Colonic mucosa (tissue), 4 donors: ENCODE measurements at regions of chr5 and their contacts with region 1.

Region 1: GRCh38 chr5:9361835-9362234 is 184.0 kb downstream of the SEMA5A start:
- DNase-seq: peak; percentile 68
- H3K4me3 ChIP-seq: no peak overlapping the region
- H3K27ac ChIP-seq: no peak overlapping the region
- H3K4me1 ChIP-seq: no peaks in the 10 kb centered on the region
- H3K27me3 ChIP-seq: no peaks in the 10 kb centered on the region
- CTCF ChIP-seq: peak; percentile 56

Region 2: DNA sequence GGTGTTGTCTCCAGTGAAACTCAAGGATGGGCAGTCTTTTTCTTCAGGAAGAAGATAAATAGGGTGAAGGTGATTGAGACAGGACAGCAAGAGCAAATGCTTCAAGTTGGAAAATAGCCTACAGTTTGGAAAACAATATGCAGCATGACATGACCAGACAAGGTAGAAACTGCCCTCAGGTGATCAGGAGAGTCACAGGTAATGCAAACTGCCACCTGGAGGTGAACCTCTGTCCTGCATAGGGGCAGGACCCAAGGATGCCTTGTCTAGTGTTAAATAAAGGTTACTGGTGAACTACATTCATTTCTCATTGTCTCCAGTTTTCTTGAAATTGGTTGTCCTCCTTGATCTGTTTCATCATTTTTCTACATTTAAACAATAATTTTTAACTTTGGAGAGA is 48.1 kb before region 1 on chr5:
- intact Hi-C with region 1: no loop called
- DNase-seq: no peak
- H3K4me3 ChIP-seq: no peak overlapping the region
- H3K27ac ChIP-seq: no peak overlapping the region
- H3K4me1 ChIP-seq: no peaks in the 10 kb centered on the region
- H3K27me3 ChIP-seq: no peaks in the 10 kb centered on the region
- CTCF ChIP-seq: no peak

Region 3: GRCh38 chr5:9519537-9519936 is 157.7 kb after region 1 on chr5:
- intact Hi-C with region 1: no loop called
- DNase-seq: no peak
- H3K4me3 ChIP-seq: no peak overlapping the region
- H3K27ac ChIP-seq: no peak overlapping the region
- H3K4me1 ChIP-seq: no peaks in the 10 kb centered on the region
- H3K27me3 ChIP-seq: no peaks in the 10 kb centered on the region
- CTCF ChIP-seq: no peak

Region 4: GRCh38 chr5:9544502-9545135 is 182.8 kb after region 1 on chr5:
- intact Hi-C with region 1: loop called (anchors 5 kb)
- DNase-seq: peak; percentile 92
- H3K4me3 ChIP-seq: peak overlapping the region; percentile 60
- H3K27ac ChIP-seq: peak overlapping the region; percentile 62
- H3K4me1 ChIP-seq: no peaks in the 10 kb centered on the region
- H3K27me3 ChIP-seq: no peaks in the 10 kb centered on the region
- CTCF ChIP-seq: peak; percentile 73

Region 5: GRCh38 chr5:9617221-9617620 is 255.4 kb after region 1 on chr5:
- intact Hi-C with region 1: loop called (anchors 5 kb)
- DNase-seq: no peak
- H3K4me3 ChIP-seq: no peak overlapping the region
- H3K27ac ChIP-seq: no peak overlapping the region
- H3K4me1 ChIP-seq: no peaks in the 10 kb centered on the region
- H3K27me3 ChIP-seq: no peaks in the 10 kb centered on the region
- CTCF ChIP-seq: no peak